ENCODE measurements at regions of chr21 and their contacts with region 1.

Region 1: GRCh38 chr21:45554477-45555175 is 12.4 kb upstream of the SLC19A1 start:
- DNase-seq: peak; percentile 82
- H3K4me3 Mint-ChIP-seq: peak overlapping the region; percentile 90
- H3K27ac Mint-ChIP-seq: peak overlapping the region; percentile 89
- H3K4me1 Mint-ChIP-seq: peaks cover 23% of the 10 kb centered on the region
- H3K27me3 Mint-ChIP-seq: no peaks in the 10 kb centered on the region

Region 2: GRCh38 chr21:45478115-45478801 is 76.4 kb before region 1 on chr21:
- intact Hi-C with region 1: loop called (anchors 5 kb)
- DNase-seq: peak; percentile 73
- H3K4me3 Mint-ChIP-seq: peak overlapping the region; percentile 83
- H3K27ac Mint-ChIP-seq: peak overlapping the region; percentile 96
- H3K4me1 Mint-ChIP-seq: peaks cover 22% of the 10 kb centered on the region
- H3K27me3 Mint-ChIP-seq: no peaks in the 10 kb centered on the region

Region 3: DNA sequence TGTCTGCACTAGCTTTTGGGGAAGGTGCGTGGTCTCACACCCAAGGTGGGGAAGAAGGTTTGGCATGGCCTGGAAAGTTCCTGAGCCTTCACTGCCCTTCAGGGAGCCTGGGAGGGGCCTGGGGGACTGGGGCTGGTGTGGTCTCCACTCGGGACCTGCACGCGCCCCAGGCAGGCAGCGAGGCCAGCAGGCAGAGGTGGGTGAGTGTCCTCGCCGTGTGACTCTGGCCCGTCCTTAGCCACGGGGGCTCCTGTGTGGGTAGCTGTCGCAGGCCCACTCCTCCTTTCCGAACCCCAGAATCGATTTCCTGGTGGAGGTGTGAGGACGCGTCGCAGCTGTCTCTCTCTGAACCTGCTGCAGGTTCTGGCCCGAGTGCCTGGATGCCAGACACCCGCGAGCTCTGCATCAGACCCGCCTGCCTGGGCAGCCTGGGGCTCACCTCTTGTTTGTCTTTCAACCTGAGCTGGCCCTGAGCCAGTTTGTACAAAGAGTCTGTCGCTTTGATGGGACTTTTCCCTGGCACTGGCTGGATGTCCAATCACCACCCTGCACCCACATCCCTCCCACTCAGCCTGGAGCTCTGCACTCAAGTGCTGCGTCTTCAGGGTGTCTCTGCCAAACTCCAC is 23.7 kb after region 1 on chr21:
- intact Hi-C with region 1: no loop called
- DNase-seq: no peak
- H3K4me3 Mint-ChIP-seq: no peak overlapping the region
- H3K27ac Mint-ChIP-seq: no peak overlapping the region
- H3K4me1 Mint-ChIP-seq: no peaks in the 10 kb centered on the region
- H3K27me3 Mint-ChIP-seq: no peaks in the 10 kb centered on the region

Region 4: GRCh38 chr21:45596704-45597318 is 42.2 kb after region 1 on chr21:
- intact Hi-C with region 1: loop called (anchors 1 kb)
- DNase-seq: peak; percentile 72
- H3K4me3 Mint-ChIP-seq: no peak overlapping the region
- H3K27ac Mint-ChIP-seq: no peak overlapping the region
- H3K4me1 Mint-ChIP-seq: peaks cover 15% of the 10 kb centered on the region
- H3K27me3 Mint-ChIP-seq: peaks cover 2% of the 10 kb centered on the region

Region 5: DNA sequence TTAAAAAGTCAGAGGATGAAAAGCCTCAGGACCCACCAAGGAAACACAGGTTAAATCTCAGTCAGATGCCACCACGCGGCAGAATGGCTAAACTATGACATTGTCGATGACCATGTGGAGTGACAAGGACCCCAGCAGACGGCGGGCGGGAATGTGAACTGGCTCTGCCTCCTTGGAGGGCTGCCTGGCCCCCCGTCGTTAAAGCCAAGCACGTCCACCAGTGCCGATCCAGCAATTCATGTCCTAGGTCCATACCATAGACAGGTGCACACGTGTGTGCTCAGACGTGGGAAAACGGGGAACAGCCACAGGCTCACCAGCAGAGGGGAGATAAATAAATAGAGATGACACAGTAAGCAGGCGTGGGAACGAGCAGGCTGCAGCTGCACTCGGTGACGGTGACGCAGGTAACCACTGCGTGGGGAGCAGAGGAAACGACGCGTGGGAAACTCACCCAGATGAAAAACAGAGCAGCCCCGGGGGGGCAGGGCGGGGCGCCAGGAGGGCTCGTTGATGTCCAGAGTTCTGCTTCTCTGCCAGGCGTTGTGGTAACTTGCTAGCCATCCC is 60.6 kb after region 1 on chr21:
- intact Hi-C with region 1: no loop called
- DNase-seq: peak; percentile 50
- H3K4me3 Mint-ChIP-seq: peak overlapping the region; percentile 83
- H3K27ac Mint-ChIP-seq: peak overlapping the region; percentile 60
- H3K4me1 Mint-ChIP-seq: peaks cover 20% of the 10 kb centered on the region
- H3K27me3 Mint-ChIP-seq: peaks cover 46% of the 10 kb centered on the region

Region 6: GRCh38 chr21:45768751-45769070 is 214.1 kb after region 1 on chr21:
- intact Hi-C with region 1: loop called (anchors 2 kb)
- DNase-seq: no peak
- H3K4me3 Mint-ChIP-seq: no peak overlapping the region
- H3K27ac Mint-ChIP-seq: peak overlapping the region; percentile 82
- H3K4me1 Mint-ChIP-seq: peaks cover 44% of the 10 kb centered on the region
- H3K27me3 Mint-ChIP-seq: no peaks in the 10 kb centered on the region

Region 7: GRCh38 chr21:45880097-45881068 is 325.8 kb after region 1 on chr21:
- intact Hi-C with region 1: loop called (anchors 5 kb)
- DNase-seq: peak; percentile 42
- H3K4me3 Mint-ChIP-seq: no peak overlapping the region
- H3K27ac Mint-ChIP-seq: no peak overlapping the region
- H3K4me1 Mint-ChIP-seq: peaks cover 26% of the 10 kb centered on the region
- H3K27me3 Mint-ChIP-seq: peaks cover 17% of the 10 kb centered on the region